ENCODE measurements at regions of chr4 and their contacts with region 1.

Region 1: GRCh38 chr4:102578819-102579218 is 77.7 kb downstream of the NFKB1 start:
- DNase-seq: peak; percentile 39
- H3K4me3 Mint-ChIP-seq: no peak overlapping the region
- H3K27ac Mint-ChIP-seq: peak overlapping the region; percentile 39
- H3K4me1 Mint-ChIP-seq: peaks cover 77% of the 10 kb centered on the region
- H3K27me3 Mint-ChIP-seq: no peaks in the 10 kb centered on the region

Region 2: DNA sequence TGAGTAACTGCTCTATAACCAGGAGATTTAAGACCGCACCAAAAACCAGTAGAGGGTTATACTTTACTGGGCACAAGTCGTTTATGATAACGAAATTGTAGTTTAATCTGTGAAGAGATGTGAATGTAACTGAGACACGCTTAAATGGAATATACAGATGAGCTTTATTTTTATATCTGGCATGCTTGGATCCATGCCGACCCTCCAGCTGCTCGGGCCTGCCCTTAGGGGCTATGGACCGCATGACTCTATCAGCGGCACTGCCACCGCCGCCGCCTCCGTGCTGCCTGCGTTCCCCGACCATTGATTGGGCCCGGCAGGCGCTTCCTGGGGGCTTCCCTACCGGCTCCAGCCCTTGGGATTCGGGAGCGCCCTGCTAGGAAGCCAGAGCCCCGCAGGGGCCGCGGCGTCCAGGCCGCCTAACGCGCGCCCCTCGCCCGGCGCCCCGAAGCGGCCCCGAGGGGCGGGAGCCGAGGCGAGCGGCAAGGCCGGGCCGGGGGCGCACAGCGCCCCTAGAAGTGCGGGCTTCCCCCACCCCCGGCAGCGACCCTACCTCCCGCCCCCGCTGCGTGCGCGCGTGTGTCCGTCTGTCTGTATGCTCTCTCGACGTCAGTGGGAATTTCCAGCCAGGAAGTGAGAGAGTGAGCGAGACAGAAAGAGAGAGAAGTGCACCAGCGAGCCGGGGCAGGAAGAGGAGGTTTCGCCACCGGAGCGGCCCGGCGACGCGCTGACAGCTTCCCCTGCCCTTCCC is 77.9 kb before region 1 on chr4 and contains the start of gene NFKB1:
- CTCF ChIA-PET with region 1: interaction called, 17 read pairs
- DNase-seq: peak; percentile 86
- H3K4me3 Mint-ChIP-seq: peak within 1 kb of the TSS; percentile 93
- H3K27ac Mint-ChIP-seq: peak within 1 kb of the TSS; percentile 94
- H3K4me1 Mint-ChIP-seq: peaks cover 25% of the 10 kb centered on the region
- H3K27me3 Mint-ChIP-seq: no peaks in the 10 kb centered on the region

Region 3: GRCh38 chr4:102598086-102598761 is 19.4 kb after region 1 on chr4:
- CTCF ChIA-PET with region 1: interaction called, 20 read pairs
- DNase-seq: no peak
- H3K4me3 Mint-ChIP-seq: peak overlapping the region; percentile 39
- H3K27ac Mint-ChIP-seq: peak overlapping the region; percentile 95
- H3K4me1 Mint-ChIP-seq: peaks cover 86% of the 10 kb centered on the region
- H3K27me3 Mint-ChIP-seq: no peaks in the 10 kb centered on the region

Region 4: GRCh38 chr4:102612824-102613366 is 34.1 kb after region 1 on chr4:
- CTCF ChIA-PET with region 1: interaction called, 12 read pairs
- DNase-seq: peak; percentile 65
- H3K4me3 Mint-ChIP-seq: peak overlapping the region; percentile 79
- H3K27ac Mint-ChIP-seq: peak overlapping the region; percentile 96
- H3K4me1 Mint-ChIP-seq: peaks cover 89% of the 10 kb centered on the region
- H3K27me3 Mint-ChIP-seq: no peaks in the 10 kb centered on the region